RWPE1 (cell line): ENCODE measurements at regions of chr2 and their contacts with region 1.

Region 1: DNA sequence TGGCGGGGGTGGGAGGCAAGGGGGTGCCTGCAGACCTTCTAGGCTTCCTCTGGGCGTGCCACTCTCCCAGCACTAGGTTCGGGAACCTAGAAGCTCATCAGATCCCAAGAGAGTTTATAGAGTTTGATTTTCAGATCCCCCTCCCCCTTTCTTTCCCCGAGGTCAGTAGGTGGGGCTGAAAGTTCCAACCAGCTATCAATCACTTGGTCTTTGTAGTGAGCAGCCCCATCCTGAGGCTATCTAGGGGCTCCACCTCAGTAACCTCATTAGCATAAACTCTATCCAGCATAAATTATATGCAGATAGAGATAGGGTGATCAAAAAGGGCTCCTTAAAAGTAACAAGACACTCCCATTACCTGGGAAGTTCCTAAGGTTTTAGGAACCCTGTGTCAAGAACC is 32.8 kb downstream of the ERLEC1 start:
- DNase-seq: no peak
- H3K27ac ChIP-seq: no peak overlapping the region
- CTCF ChIP-seq: no peak

Region 2: GRCh38 chr2:53654396-53654795 is 165.2 kb before region 1 on chr2:
- CTCF ChIA-PET with region 1: no interaction called
- POLR2A ChIA-PET with region 1: no interaction called
- DNase-seq: no peak
- H3K27ac ChIP-seq: no peak overlapping the region
- CTCF ChIP-seq: no peak

Region 3: DNA sequence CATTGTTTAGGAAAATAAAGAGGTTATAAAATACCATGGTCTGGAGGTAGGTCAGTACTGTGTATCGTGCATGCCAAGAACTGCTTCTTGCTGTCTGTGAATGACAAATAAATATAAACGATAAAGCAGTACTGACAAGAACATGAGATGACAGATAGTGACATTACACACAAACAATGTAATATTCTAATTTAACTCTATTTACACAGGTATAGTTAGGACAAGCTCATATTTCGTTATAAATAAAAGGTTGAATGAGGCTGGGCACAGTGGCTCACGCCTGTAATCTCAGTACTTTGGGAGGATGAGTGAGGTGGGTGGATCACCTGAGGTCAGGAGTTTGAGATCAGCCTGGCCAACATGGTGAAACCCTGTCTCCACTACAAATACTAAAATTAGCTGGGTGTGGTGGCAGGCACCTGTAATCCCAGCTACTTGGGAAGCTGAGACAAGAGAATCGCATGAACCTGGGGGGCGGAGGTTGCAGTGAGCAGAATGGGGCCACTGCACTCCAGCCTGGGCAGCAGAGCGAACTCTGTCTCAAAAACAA is 54.8 kb after region 1 on chr2:
- CTCF ChIA-PET with region 1: no interaction called
- POLR2A ChIA-PET with region 1: interaction called, 10 read pairs
- DNase-seq: no peak
- H3K27ac ChIP-seq: no peak overlapping the region
- CTCF ChIP-seq: no peak

Region 4: GRCh38 chr2:53903011-53903410 is 83.4 kb after region 1 on chr2:
- CTCF ChIA-PET with region 1: no interaction called
- POLR2A ChIA-PET with region 1: no interaction called
- DNase-seq: no peak
- H3K27ac ChIP-seq: no peak overlapping the region
- CTCF ChIP-seq: no peak